ENCODE measurements at regions of chr6 and their contacts with region 1.

Region 1: GRCh38 chr6:137313928-137314855 is 95.0 kb upstream of the IFNGR1 start:
- DNase-seq: peak; percentile 81
- H3K4me3 ChIP-seq: no peak overlapping the region
- H3K27ac ChIP-seq: no peak overlapping the region
- H3K4me1 ChIP-seq: peaks cover 4% of the 10 kb centered on the region
- CTCF ChIP-seq: peak; percentile 99

Region 2: GRCh38 chr6:136466777-136467176 is 847.4 kb before region 1 on chr6:
- CTCF ChIA-PET with region 1: no interaction called
- POLR2A ChIA-PET with region 1: no interaction called
- intact Hi-C with region 1: no loop called
- DNase-seq: no peak
- H3K4me3 ChIP-seq: no peak overlapping the region
- H3K27ac ChIP-seq: no peak overlapping the region
- H3K4me1 ChIP-seq: no peaks in the 10 kb centered on the region
- CTCF ChIP-seq: no peak

Region 3: GRCh38 chr6:136967876-136968752 is 346.1 kb before region 1 on chr6:
- CTCF ChIA-PET with region 1: no interaction called
- POLR2A ChIA-PET with region 1: no interaction called
- intact Hi-C with region 1: loop called (anchors 5 kb)
- DNase-seq: peak; percentile 79
- H3K4me3 ChIP-seq: peak overlapping the region; percentile 43
- H3K27ac ChIP-seq: no peak overlapping the region
- H3K4me1 ChIP-seq: no peaks in the 10 kb centered on the region
- CTCF ChIP-seq: peak; percentile 88

Region 4: DNA sequence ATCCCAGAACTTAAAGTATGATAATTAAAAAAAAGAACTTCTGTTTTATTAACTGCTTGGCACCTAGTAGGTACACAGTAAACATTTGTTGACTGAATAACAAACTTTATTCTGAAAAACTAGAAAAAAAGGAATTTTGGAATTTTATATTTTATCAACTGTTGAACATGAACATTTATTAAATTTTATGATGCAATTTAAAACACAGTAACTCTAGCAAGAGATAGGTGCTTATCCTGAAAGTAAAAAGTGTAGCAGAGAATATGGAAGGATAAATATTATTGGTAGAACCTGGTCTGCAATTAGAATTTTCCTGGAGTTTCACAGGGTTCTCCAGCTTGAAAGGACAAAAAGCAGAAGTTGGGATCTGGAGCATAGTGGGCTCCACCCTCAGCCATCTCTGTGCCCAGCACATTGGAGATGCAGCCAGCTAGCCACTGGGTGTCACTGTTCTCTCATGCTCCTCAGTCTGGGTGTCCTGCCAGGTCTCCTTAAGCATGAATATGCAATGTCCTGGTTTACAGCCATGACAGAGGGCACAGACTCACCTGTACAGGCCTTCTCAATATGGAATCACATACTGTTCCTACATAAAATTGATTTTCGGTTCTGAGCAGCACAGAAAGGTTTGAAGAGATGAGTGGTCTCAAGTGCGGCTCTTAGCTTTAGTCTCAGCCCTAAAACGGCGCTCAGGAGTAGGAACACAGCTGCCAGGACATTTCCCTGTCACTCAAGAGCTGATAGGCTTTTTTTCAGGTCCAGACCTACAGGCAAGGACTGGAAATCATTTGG is 237.7 kb before region 1 on chr6:
- CTCF ChIA-PET with region 1: interaction called, 5 read pairs
- POLR2A ChIA-PET with region 1: no interaction called
- intact Hi-C with region 1: loop called (anchors 1 kb)
- DNase-seq: peak; percentile 82
- H3K4me3 ChIP-seq: no peak overlapping the region
- H3K27ac ChIP-seq: no peak overlapping the region
- H3K4me1 ChIP-seq: no peaks in the 10 kb centered on the region
- CTCF ChIP-seq: peak; percentile 93

Region 5: GRCh38 chr6:137165375-137166246 is 148.6 kb before region 1 on chr6:
- CTCF ChIA-PET with region 1: no interaction called
- POLR2A ChIA-PET with region 1: interaction called, 3 read pairs
- intact Hi-C with region 1: loop called (anchors 5 kb)
- DNase-seq: peak; percentile 79
- H3K4me3 ChIP-seq: no peak overlapping the region
- H3K27ac ChIP-seq: no peak overlapping the region
- H3K4me1 ChIP-seq: peaks cover 15% of the 10 kb centered on the region
- CTCF ChIP-seq: peak; percentile 87

Region 6: DNA sequence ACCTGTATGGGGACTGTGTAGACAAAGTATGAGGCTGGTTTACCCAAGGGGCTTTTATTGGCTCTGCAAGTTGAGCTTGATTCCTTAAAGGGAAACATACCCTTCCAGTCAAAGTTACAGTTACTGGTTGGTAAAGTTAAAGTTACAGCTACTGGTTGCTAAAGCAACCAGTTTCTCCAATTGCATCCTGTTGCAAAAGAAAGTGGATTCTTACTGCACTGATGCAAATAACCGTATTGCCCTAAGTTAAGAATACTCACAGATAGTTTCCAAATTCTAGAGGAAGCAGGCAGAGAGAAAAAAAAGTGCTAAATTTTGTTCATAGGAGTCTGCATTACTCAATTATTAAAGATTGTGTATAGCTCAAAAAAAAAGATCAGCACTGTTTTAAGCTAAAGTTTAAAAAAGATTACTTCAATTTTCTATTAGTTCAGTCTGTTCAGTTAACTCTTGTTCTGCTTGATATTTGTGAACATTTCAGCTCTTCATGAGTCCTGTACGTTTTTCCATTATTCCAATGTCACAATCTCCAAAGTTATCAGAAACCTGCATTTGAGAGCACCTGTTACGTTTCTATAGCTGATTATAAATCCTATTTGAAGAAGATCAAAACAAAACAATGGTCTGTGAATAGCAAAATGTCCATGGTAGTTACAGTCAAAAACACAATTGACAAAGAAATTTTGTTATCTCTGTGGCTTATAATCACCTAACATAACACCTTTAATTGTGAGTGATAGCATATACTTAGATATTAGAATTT is 132.1 kb before region 1 on chr6:
- CTCF ChIA-PET with region 1: no interaction called
- POLR2A ChIA-PET with region 1: no interaction called
- intact Hi-C with region 1: loop called (anchors 5 kb)
- DNase-seq: peak; percentile 28
- H3K4me3 ChIP-seq: no peak overlapping the region
- H3K27ac ChIP-seq: no peak overlapping the region
- H3K4me1 ChIP-seq: no peaks in the 10 kb centered on the region
- CTCF ChIP-seq: no peak

Region 7: GRCh38 chr6:137240168-137240567 is 74.0 kb before region 1 on chr6:
- CTCF ChIA-PET with region 1: no interaction called
- POLR2A ChIA-PET with region 1: no interaction called
- intact Hi-C with region 1: no loop called
- DNase-seq: no peak
- H3K4me3 ChIP-seq: no peak overlapping the region
- H3K27ac ChIP-seq: no peak overlapping the region
- H3K4me1 ChIP-seq: peaks cover 9% of the 10 kb centered on the region
- CTCF ChIP-seq: no peak

Region 8: GRCh38 chr6:137271245-137272183 is 42.7 kb before region 1 on chr6:
- CTCF ChIA-PET with region 1: no interaction called
- POLR2A ChIA-PET with region 1: interaction called, 3 read pairs
- intact Hi-C with region 1: loop called (anchors 1 kb)
- DNase-seq: peak; percentile 66
- H3K4me3 ChIP-seq: no peak overlapping the region
- H3K27ac ChIP-seq: no peak overlapping the region
- H3K4me1 ChIP-seq: no peaks in the 10 kb centered on the region
- CTCF ChIP-seq: peak; percentile 97

Region 9: DNA sequence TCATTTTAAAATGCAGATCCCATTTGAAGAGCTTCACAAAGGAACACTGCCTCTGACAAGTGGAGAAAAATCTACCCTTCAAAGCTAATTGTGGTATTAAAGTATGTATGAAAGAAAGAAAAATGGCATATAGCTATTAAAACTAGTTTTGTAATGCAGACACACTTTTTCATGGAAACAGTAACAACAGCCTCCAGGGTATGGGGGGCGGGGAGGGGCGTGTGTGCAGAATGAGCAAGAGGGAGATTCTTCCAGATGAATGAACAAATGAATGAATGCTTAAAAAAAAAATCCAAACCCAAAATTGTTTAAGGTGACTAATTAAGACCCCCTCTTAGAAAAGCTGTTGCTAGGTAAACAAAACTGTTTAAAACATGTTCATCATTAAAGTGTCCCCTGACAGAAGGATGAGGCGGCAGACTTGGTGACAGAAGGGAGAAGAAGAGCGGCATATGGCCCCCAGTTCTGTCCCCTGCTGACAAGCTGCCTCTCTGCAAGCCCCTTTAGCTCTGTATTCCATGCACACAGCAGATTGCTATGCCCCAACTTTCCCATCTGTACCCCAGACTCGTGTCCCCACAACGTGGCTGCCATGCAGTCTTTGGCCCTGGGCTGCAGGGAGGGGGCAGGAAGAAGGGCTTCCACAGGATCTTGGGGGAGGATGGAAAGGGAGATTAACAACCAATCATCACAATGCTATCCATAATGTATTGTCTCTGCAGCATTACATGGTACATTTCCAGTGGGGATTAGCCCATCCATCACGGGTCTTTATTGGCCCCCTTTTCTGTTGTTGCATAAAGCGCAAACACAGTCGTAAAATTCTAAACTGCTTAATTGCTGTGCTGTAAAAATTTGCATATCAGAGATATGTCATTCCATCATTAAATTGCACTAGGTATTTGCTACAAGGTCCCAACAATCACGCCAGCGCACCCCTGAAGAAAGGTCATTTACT is 288.4 kb after region 1 on chr6:
- CTCF ChIA-PET with region 1: no interaction called
- POLR2A ChIA-PET with region 1: no interaction called
- intact Hi-C with region 1: no loop called
- DNase-seq: no peak
- H3K4me3 ChIP-seq: no peak overlapping the region
- H3K27ac ChIP-seq: no peak overlapping the region
- H3K4me1 ChIP-seq: no peaks in the 10 kb centered on the region
- CTCF ChIP-seq: no peak

Region 10: DNA sequence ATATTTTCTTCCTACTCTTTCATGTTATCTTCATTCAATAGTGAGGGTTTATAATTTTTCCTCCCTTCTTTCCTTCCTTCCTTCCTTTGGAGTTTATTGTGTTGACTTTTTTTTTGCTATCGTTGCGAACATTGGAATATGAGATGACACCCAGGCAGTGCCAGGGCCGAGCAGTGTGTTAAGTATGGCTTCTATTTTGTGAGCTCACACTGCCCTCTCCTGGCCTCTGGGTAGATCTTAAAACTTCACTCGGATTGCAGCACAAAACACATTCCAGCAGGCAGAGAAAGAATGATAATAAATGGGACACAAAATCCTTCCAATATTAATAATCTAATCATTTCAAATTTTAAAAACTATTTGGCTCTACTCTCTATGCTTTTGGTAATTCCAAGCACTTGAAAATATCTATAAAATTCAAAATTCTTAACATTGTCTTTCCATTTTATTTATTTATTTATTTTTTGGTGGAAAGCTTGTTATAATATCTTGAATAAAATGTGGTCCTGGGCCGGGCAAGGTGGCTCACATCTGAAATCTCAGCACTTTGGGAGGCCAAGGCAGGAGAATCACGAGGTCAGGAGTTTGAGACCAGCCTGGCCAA is 327.4 kb after region 1 on chr6:
- CTCF ChIA-PET with region 1: no interaction called
- POLR2A ChIA-PET with region 1: no interaction called
- intact Hi-C with region 1: loop called (anchors 2 kb)
- DNase-seq: peak; percentile 76
- H3K4me3 ChIP-seq: no peak overlapping the region
- H3K27ac ChIP-seq: no peak overlapping the region
- H3K4me1 ChIP-seq: peaks cover 5% of the 10 kb centered on the region
- CTCF ChIP-seq: peak; percentile 86